WTC11 (cell line): ENCODE measurements at regions of chr20 and their contacts with region 1.

Region 1: DNA sequence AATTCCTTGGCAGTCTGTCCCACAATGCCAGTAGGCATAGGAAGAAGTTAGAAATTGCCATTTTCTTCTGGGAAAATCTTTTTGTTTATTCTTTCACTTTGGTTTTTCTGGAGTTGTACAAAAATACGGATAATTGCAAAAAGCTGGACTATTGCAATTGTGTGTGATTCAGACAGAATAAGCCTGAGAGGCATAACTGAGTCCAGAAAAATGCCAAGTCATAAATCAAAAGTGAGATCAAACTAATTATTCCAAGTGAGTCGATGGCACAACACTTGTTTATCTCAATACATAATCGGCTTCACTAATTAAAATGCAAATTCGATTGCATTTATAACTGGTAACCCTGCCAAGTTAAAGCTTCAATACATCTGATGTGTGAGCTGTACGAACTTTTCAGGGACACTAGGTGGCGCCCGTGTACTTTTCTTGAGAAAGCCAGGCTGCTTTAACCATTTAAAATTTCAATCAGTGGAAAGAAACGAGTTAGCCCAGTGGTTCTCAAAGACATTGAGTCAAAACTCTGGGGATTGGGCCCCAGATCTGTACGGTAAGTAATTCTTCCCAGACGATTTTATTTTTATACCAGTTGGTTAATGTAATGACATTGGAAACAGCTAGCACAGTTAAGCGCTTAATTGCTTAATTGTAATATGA is 102.6 kb downstream of the LAMP5 start:
- DNase-seq: peak; percentile 61
- ATAC-seq: peak; percentile 74
- H3K4me3 Mint-ChIP-seq: no peak overlapping the region
- H3K27ac Mint-ChIP-seq: no peak overlapping the region
- H3K4me1 Mint-ChIP-seq: peaks cover 3% of the 10 kb centered on the region; the same call in 1 of the 2 replicates
- H3K27me3 Mint-ChIP-seq: no peaks in the 10 kb centered on the region
- CTCF ChIP-seq: peak; percentile 80

Region 2: GRCh38 chr20:9467995-9468394 is 149.0 kb before region 1 on chr20:
- CTCF ChIA-PET with region 1: interaction called, 62 read pairs
- POLR2A ChIA-PET with region 1: interaction called, 3 read pairs
- DNase-seq: peak; percentile 40
- ATAC-seq: peak; percentile 74
- H3K4me3 Mint-ChIP-seq: no peak overlapping the region
- H3K27ac Mint-ChIP-seq: no peak overlapping the region
- H3K4me1 Mint-ChIP-seq: no peaks in the 10 kb centered on the region
- H3K27me3 Mint-ChIP-seq: no peaks in the 10 kb centered on the region
- CTCF ChIP-seq: peak; percentile 66

Region 3: DNA sequence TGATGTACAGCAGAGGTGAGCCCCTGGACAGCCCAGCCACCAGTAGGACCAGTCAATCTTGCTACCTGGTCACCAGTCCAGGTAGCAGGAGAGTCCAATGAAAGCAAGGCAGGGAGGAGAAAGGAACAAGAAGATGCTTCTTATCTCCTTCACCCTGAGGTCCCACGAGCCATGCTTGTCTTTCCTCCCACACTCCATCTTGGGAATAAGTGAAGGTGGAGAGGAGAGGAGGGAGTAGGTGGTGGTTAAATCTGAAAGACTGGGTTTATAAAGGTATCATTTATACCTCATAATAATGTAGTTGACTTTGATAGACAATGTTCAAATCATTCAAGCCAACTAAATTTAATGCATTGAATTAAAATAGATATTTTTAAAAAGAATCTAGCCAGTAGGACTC is 66.7 kb before region 1 on chr20:
- CTCF ChIA-PET with region 1: no interaction called
- POLR2A ChIA-PET with region 1: no interaction called
- DNase-seq: no peak
- ATAC-seq: no peak
- H3K4me3 Mint-ChIP-seq: no peak overlapping the region
- H3K27ac Mint-ChIP-seq: no peak overlapping the region
- H3K4me1 Mint-ChIP-seq: peaks cover 3% of the 10 kb centered on the region
- H3K27me3 Mint-ChIP-seq: peaks cover 2% of the 10 kb centered on the region; the same call in 1 of the 2 replicates
- CTCF ChIP-seq: no peak

Region 4: DNA sequence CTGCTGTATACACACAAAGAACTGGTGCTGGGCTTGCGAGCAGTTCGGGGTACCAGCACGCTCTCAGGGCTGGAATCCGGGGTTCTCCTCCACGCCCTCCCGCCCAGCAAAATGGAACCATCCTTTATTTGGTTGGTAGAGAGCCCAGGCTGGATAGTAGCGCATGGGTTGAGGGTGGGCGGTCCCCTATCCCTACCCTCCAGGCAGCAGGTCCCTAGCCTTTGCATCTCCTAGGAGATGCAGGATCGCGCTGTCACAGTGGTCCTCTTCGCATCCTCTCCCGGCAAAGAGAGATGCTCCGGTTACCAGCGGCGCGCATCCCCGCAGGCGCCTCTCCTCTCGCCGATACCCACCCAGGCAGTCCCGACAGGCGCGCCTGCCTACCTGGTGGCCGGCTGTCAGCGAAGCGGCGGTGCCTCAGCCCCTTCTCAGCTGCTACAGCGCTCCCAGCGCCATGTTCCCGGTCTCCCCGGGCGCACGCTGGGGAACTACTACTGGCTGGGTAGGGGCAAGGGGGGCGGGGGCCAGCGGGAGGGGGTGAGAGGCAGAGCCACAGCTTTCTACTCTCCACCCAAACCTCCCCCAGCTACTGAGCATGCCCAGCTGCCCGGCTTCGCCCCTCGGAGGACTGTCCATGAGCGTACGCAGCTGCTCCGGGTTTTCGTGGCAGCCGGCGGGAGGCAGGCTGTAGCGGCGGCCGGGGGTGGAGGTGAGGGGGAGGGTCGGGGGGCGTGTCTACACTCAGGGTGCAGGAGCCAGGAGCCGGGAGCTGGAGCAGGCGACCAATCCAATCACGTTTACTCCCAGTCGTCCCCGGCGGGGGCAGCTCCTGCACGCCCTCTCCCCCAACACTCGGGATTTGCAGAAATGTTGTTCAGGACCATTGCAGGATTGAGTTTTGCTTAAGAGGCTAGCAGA is 221.7 kb after region 1 on chr20 and contains the start of gene PAK5:
- CTCF ChIA-PET with region 1: interaction called, 14 read pairs
- POLR2A ChIA-PET with region 1: no interaction called
- DNase-seq: peak; percentile 92
- ATAC-seq: peak; percentile 93
- H3K4me3 Mint-ChIP-seq: peak within 1 kb of the TSS; percentile 74
- H3K27ac Mint-ChIP-seq: peak within 1 kb of the TSS; percentile 61
- H3K4me1 Mint-ChIP-seq: peaks cover 13% of the 10 kb centered on the region
- H3K27me3 Mint-ChIP-seq: peaks cover 29% of the 10 kb centered on the region
- CTCF ChIP-seq: no peak
- total RNA-seq, gene PAK5: 0.31 to 0.53 TPM (median 0.48 TPM) in 3 replicates

Region 5: GRCh38 chr20:9903048-9903655 is 286.2 kb after region 1 on chr20:
- CTCF ChIA-PET with region 1: interaction called, 30 read pairs
- POLR2A ChIA-PET with region 1: no interaction called
- DNase-seq: peak; percentile 55
- ATAC-seq: peak; percentile 74
- H3K4me3 Mint-ChIP-seq: no peak overlapping the region
- H3K27ac Mint-ChIP-seq: no peak overlapping the region
- H3K4me1 Mint-ChIP-seq: peaks cover 2% of the 10 kb centered on the region; the same call in 1 of the 2 replicates
- H3K27me3 Mint-ChIP-seq: no peaks in the 10 kb centered on the region; the same call in 1 of the 2 replicates
- CTCF ChIP-seq: peak; percentile 59

Region 6: DNA sequence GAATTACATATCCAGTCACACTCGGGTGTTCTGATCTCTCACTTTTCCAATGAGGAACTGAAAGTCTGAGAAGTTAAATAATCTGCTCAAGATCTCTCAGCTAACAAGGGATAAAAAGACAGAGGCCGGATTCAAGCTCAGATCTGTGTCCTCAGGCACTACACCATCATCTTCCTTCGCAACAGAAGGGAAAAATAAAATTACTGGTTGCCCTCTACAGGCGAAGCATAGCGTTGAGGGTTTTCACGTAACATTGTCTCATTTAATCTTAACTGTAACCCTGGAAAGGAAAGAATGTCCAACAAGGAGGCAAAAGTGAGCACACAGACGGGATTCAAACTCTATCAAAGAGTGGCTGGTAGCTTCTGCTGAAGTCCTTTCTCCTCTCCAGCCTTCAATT is 350.0 kb after region 1 on chr20:
- CTCF ChIA-PET with region 1: interaction called, 17 read pairs
- POLR2A ChIA-PET with region 1: no interaction called
- DNase-seq: no peak
- ATAC-seq: peak; percentile 57; the same call in 1 of the 2 replicates
- H3K4me3 Mint-ChIP-seq: no peak overlapping the region
- H3K27ac Mint-ChIP-seq: no peak overlapping the region
- H3K4me1 Mint-ChIP-seq: peaks cover 20% of the 10 kb centered on the region
- H3K27me3 Mint-ChIP-seq: no peaks in the 10 kb centered on the region
- CTCF ChIP-seq: no peak

Region 7: DNA sequence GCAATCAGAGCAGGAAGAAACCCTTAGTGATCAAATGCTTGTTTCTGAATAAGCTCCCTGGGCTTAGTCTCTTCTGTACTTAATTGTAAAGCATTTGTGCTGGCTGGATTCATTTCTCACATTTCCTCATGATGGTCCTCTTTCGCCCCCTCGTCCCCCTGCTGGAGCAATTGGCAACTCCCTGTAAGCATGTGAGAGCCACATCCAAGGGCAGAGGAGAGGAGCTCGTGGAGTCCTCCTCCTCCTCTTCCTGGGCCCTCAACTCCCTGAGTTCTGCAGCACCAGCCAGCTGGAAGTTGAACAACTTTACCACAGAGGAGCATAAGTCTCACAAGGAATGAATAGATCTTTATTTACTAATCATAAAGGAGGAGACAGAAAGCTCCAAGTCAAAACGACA is 430.5 kb after region 1 on chr20:
- CTCF ChIA-PET with region 1: interaction called, 24 read pairs
- POLR2A ChIA-PET with region 1: no interaction called
- DNase-seq: peak; percentile 62
- ATAC-seq: peak; percentile 98
- H3K4me3 Mint-ChIP-seq: no peak overlapping the region
- H3K27ac Mint-ChIP-seq: no peak overlapping the region
- H3K4me1 Mint-ChIP-seq: no peaks in the 10 kb centered on the region
- H3K27me3 Mint-ChIP-seq: no peaks in the 10 kb centered on the region
- CTCF ChIP-seq: 0 out of 2 replicates have a peak, but pooled peaks have one; percentile 36